PC-9 (cell line): ENCODE measurements at regions of chr12 and their contacts with region 1.

Region 1: GRCh38 chr12:21122388-21122787 is 8.6 kb upstream of the SLCO1B1 start:
- DNase-seq: no peak
- H3K4me3 ChIP-seq: no peak overlapping the region
- H3K27ac ChIP-seq: no peak overlapping the region
- H3K4me1 ChIP-seq: no peaks in the 10 kb centered on the region
- H3K27me3 ChIP-seq: no peaks in the 10 kb centered on the region
- CTCF ChIP-seq: no peak

Region 2: GRCh38 chr12:20260851-20261250 is 861.5 kb before region 1 on chr12:
- CTCF ChIA-PET with region 1: no interaction called
- POLR2A ChIA-PET with region 1: interaction called, 11 read pairs
- intact Hi-C with region 1: no loop called
- DNase-seq: no peak
- H3K4me3 ChIP-seq: no peak overlapping the region
- H3K27ac ChIP-seq: no peak overlapping the region
- H3K4me1 ChIP-seq: no peaks in the 10 kb centered on the region
- H3K27me3 ChIP-seq: no peaks in the 10 kb centered on the region
- CTCF ChIP-seq: no peak